T-cell (primary cell): ENCODE measurements at regions of chr13 and their contacts with region 1.

Region 1: DNA sequence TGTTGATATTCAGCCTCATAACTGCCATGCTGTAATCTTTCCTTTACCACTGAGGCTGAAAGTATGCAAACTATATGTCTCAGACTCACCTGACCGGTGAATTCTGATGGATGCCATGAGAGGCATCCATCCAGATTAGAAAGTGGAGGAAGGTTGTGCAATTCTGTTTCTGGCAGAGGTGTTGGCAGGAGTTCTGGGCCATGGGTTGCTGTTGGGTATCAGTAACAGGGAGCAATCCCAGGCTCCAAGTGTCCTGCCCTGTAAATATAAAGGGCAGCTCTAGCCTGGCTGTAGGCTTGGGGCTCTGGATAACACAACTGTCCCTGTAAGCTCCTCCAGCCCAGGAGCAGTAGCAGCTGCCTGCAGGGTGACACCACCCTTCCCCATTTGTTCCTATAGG is 77.4 kb upstream of the ABCC4 start:
- DNase-seq: no peak
- ATAC-seq: no peak
- H3K4me3 ChIP-seq: no peak overlapping the region
- H3K4me3 Mint-ChIP-seq: no peak overlapping the region
- H3K27ac ChIP-seq: no peak overlapping the region
- H3K27ac Mint-ChIP-seq: no peak overlapping the region
- H3K4me1 ChIP-seq: peaks cover 0 to 6% of the 10 kb centered on the region in 2 experiments
- H3K4me1 Mint-ChIP-seq: peaks cover 0 to 5% (median 3%) of the 10 kb centered on the region in 3 donors
- H3K27me3 ChIP-seq: no peaks in the 10 kb centered on the region
- H3K27me3 Mint-ChIP-seq: peaks cover 0 to 13% of the 10 kb centered on the region in 2 donors

Region 2: GRCh38 chr13:94268661-94269060 is 1109.9 kb before region 1 on chr13:
- CTCF ChIA-PET with region 1: no interaction called
- POLR2A ChIA-PET with region 1: interaction called in 1 of 2 experiments, 15 read pairs
- DNase-seq: no peak
- ATAC-seq: no peak
- H3K4me3 ChIP-seq: no peak overlapping the region
- H3K4me3 Mint-ChIP-seq: no peak overlapping the region
- H3K27ac ChIP-seq: no peak overlapping the region
- H3K27ac Mint-ChIP-seq: no peak overlapping the region
- H3K4me1 ChIP-seq: peaks cover 0 to 3% of the 10 kb centered on the region in 2 experiments
- H3K4me1 Mint-ChIP-seq: peaks cover 0 to 5% (median 0%) of the 10 kb centered on the region in 3 donors
- H3K27me3 ChIP-seq: no peaks in the 10 kb centered on the region
- H3K27me3 Mint-ChIP-seq: no peaks in the 10 kb centered on the region

Region 3: GRCh38 chr13:94335761-94336526 is 1042.7 kb before region 1 on chr13:
- CTCF ChIA-PET with region 1: no interaction called
- POLR2A ChIA-PET with region 1: no interaction called
- DNase-seq: no peak
- ATAC-seq: no peak
- H3K4me3 ChIP-seq: no peak overlapping the region
- H3K4me3 Mint-ChIP-seq: no peak overlapping the region
- H3K27ac ChIP-seq: no peak overlapping the region
- H3K27ac Mint-ChIP-seq: no peak overlapping the region
- H3K4me1 ChIP-seq: peaks cover 3 to 5% of the 10 kb centered on the region in 2 experiments
- H3K4me1 Mint-ChIP-seq: peaks cover 6 to 11% (median 9%) of the 10 kb centered on the region in 3 donors
- H3K27me3 ChIP-seq: peaks cover 0 to 11% of the 10 kb centered on the region in 2 experiments
- H3K27me3 Mint-ChIP-seq: peaks cover 16 to 26% of the 10 kb centered on the region in 2 donors